Mammary epithelial cell (primary cell): ENCODE measurements at regions of chr19 and their contacts with region 1.

Region 1: GRCh38 chr19:35468637-35469036 is 20.6 kb downstream of the FFAR2 start:
- DNase-seq: peak; percentile 24
- H3K4me3 ChIP-seq: no peak overlapping the region
- H3K27ac ChIP-seq: no peak overlapping the region
- H3K4me1 ChIP-seq: no peaks in the 10 kb centered on the region
- H3K27me3 ChIP-seq: no peaks in the 10 kb centered on the region
- CTCF ChIP-seq: peak; percentile 64 to 92

Region 2: GRCh38 chr19:35269421-35270117 is 199.1 kb before region 1 on chr19:
- CTCF ChIA-PET with region 1: interaction called, 3 read pairs
- dilution Hi-C with region 1: no loop called
- in situ Hi-C with region 1: no loop called
- intact Hi-C with region 1: loop called (anchors 1 kb)
- DNase-seq: peak; percentile 70
- H3K4me3 ChIP-seq: peak overlapping the region; percentile 15 to 72 (median 62)
- H3K27ac ChIP-seq: no peak overlapping the region
- H3K4me1 ChIP-seq: peaks cover 37% of the 10 kb centered on the region
- H3K27me3 ChIP-seq: no peaks in the 10 kb centered on the region
- CTCF ChIP-seq: peak; percentile 26 to 61

Region 3: DNA sequence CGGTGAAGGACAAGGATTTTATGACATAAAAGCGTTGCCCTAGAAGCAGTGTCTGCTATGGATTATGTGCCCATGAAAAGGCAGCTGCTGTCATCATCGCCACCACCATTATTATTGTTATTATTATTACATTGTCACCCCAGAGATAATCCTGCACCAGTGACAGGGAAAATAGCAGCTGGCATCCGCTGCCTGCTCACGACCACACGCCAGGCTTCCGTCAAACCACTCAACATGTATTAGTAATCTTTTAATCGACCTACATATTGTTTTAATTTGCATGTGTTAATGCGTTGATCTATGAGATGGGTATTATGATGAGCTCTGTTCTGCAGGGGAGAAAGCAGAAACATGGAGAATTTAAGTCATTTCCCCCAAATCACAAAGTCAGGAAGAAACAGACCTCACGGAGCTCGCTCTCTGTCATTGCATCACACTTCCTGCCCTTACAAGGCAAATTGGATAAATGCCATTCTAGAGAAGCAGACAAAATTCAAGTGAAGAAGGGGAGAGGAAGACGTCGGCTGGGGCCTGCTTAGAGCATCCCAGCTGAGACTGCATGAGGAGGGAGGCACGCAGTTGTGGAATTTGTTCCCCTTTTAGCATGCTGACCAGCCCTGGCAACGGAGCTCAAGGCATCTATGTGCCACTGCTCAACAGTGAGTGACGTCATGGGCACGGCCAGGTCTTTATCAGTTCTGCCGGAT is 110.6 kb before region 1 on chr19 and contains the start of gene FFAR3:
- CTCF ChIA-PET with region 1: no interaction called
- dilution Hi-C with region 1: no loop called
- in situ Hi-C with region 1: loop called (anchors 5 to 10 kb)
- intact Hi-C with region 1: no loop called
- DNase-seq: no peak
- H3K4me3 ChIP-seq: no peak within 1 kb of the TSS
- H3K27ac ChIP-seq: no peak within 1 kb of the TSS
- H3K4me1 ChIP-seq: no peaks in the 10 kb centered on the region
- H3K27me3 ChIP-seq: no peaks in the 10 kb centered on the region
- CTCF ChIP-seq: no peak
- total RNA-seq, gene FFAR3: not detected

Region 4: GRCh38 chr19:35501684-35502083 is 33.0 kb after region 1 on chr19:
- CTCF ChIA-PET with region 1: no interaction called
- dilution Hi-C with region 1: no loop called
- in situ Hi-C with region 1: no loop called
- intact Hi-C with region 1: no loop called
- DNase-seq: no peak
- H3K4me3 ChIP-seq: no peak overlapping the region
- H3K27ac ChIP-seq: no peak overlapping the region
- H3K4me1 ChIP-seq: no peaks in the 10 kb centered on the region
- H3K27me3 ChIP-seq: no peaks in the 10 kb centered on the region
- CTCF ChIP-seq: no peak